ENCODE measurements at regions of chr9 and their contacts with region 1.

Region 1: GRCh38 chr9:36023260-36024048 is 13.3 kb upstream of the RECK start:
- DNase-seq: peak; percentile 72 to 78
- ATAC-seq: peak; percentile 71
- H3K4me3 ChIP-seq: no peak overlapping the region
- H3K27ac ChIP-seq: no peak overlapping the region
- H3K4me1 ChIP-seq: no peaks in the 10 kb centered on the region
- H3K27me3 ChIP-seq: no peaks in the 10 kb centered on the region

Region 2: GRCh38 chr9:35628389-35628991 is 395.0 kb before region 1 on chr9:
- intact Hi-C with region 1: no loop called
- DNase-seq: no peak
- ATAC-seq: no peak
- H3K4me3 ChIP-seq: no peak overlapping the region
- H3K27ac ChIP-seq: no peak overlapping the region
- H3K4me1 ChIP-seq: no peaks in the 10 kb centered on the region
- H3K27me3 ChIP-seq: no peaks in the 10 kb centered on the region

Region 3: GRCh38 chr9:35932735-35933134 is 90.7 kb before region 1 on chr9:
- intact Hi-C with region 1: no loop called
- DNase-seq: no peak
- ATAC-seq: no peak
- H3K4me3 ChIP-seq: no peak overlapping the region
- H3K27ac ChIP-seq: no peak overlapping the region
- H3K4me1 ChIP-seq: peaks cover 0 to 2% of the 10 kb centered on the region in 2 donors
- H3K27me3 ChIP-seq: no peaks in the 10 kb centered on the region

Region 4: GRCh38 chr9:35944841-35945240 is 78.6 kb before region 1 on chr9:
- intact Hi-C with region 1: no loop called
- DNase-seq: no peak
- ATAC-seq: no peak
- H3K4me3 ChIP-seq: no peak overlapping the region
- H3K27ac ChIP-seq: peak overlapping the region; percentile 47 to 76
- H3K4me1 ChIP-seq: no peaks in the 10 kb centered on the region
- H3K27me3 ChIP-seq: no peaks in the 10 kb centered on the region

Region 5: DNA sequence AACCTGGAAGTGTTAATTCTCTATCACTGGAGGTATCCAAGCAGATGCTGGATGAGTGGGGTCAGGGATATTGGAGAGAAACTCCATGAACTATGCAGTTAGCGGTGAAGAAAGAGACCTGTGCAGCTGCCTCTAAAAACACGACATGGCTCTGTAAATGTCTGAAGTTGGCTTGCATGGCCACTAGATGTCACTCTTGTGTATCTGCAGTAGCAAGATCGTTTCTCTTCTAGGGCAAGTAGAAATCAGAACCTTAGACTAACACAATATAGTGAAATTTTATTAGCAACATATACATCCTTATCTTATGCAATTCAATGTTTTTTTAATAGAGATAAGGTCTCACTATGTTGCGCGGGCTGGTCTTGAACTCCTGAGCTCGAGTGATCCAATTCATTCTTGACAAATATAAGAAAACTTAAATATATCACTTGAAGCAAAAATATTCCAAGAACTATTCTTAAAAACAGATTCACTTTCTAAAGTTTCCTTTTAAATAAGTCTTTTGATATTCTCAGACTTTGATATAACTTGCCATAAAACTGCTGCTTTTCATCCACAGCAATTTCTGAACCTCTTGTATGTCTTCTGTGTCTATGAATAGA is 68.4 kb before region 1 on chr9:
- intact Hi-C with region 1: loop called (anchors 2 to 5 kb)
- DNase-seq: no peak
- ATAC-seq: peak; percentile 89
- H3K4me3 ChIP-seq: no peak overlapping the region
- H3K27ac ChIP-seq: no peak overlapping the region
- H3K4me1 ChIP-seq: no peaks in the 10 kb centered on the region
- H3K27me3 ChIP-seq: no peaks in the 10 kb centered on the region

Region 6: DNA sequence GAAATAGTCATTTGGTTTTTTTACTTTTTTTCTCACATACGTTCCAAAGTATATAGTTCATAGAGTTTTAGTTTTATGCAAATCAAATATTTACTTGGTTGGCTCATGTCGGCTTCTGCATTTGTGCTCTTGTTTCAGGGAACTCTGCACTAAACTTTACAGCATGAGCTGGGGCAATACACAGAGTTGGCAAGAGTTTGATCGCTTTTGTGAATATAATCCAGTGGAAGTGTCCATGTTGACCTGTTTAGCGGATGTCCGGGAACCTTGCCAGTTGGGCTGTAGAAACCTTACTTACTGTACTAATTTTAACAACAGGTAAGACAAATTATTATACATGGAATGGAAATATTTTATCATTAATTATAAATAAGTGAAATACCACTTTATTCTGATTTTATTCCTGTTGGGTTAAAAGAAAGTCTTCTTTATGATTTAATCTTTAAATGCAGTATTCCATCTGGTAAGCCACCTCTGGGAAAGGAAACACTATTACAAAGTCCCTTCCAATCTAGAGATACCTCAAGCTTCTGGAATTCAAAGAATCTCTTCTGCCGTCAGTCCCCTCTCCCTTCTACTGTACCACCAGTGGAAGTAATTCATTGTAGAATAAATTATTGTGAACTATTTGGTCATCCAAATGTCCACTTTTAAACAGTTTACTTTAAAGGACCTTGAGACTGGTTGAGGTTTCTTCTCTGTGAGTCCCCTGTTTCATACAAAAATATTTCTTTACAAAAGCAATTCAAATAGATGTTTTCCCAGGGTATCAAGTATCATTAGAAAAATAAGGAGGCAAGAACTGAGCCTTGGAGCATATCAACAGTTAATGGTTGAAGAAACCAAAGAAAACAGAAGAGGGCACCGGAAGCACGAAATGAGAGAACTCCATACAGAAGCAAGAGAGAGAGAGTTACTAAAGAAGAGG is 67.8 kb after region 1 on chr9:
- intact Hi-C with region 1: no loop called
- DNase-seq: no peak
- ATAC-seq: no peak
- H3K4me3 ChIP-seq: no peak overlapping the region
- H3K27ac ChIP-seq: no peak overlapping the region
- H3K4me1 ChIP-seq: peaks cover 0 to 2% of the 10 kb centered on the region in 2 donors
- H3K27me3 ChIP-seq: no peaks in the 10 kb centered on the region

Measured in aorta (tissue), 5 donors.